B cell (primary cell): ENCODE measurements at regions of chr5 and their contacts with region 1.

Region 1: DNA sequence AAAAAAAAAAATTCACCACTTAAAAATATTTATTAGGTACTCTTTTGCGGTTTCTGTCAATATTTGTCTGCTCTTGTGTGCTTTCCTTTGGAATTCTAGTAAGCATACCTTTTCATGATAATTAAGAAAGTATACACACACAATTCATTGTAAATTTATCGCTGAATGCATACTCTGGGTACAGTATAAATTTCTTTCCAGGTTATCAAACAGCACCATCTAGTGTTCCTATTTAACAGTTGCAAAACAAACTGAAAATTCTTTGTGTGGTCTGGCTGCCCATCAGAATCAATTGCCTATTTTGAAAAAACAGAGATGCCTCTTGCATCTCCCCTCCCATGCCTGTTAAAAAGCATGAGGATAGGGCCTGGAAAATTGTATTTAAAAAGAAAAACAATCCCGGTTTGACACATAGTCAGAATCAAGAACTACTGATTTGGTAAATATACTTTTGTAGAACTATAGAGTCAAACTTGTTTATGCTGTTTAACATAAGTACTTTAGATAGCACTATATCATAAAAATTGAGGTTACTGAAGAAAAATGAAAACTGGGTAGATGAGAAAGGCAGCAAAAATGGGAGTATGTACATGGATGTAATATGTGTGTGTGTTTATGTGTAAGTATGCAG is 16.2 kb downstream of the PGGT1B start:
- DNase-seq: peak; percentile 58
- ATAC-seq: peak; percentile 53
- H3K4me3 ChIP-seq: no peak overlapping the region
- H3K4me3 Mint-ChIP-seq: no peak overlapping the region
- H3K27ac ChIP-seq: no peak overlapping the region
- H3K27ac Mint-ChIP-seq: no peak overlapping the region
- H3K4me1 ChIP-seq: no peaks in the 10 kb centered on the region
- H3K4me1 Mint-ChIP-seq: peaks cover 15% of the 10 kb centered on the region
- H3K27me3 ChIP-seq: no peaks in the 10 kb centered on the region
- H3K27me3 Mint-ChIP-seq: no peaks in the 10 kb centered on the region
- CTCF ChIP-seq: peak; percentile 93

Region 2: DNA sequence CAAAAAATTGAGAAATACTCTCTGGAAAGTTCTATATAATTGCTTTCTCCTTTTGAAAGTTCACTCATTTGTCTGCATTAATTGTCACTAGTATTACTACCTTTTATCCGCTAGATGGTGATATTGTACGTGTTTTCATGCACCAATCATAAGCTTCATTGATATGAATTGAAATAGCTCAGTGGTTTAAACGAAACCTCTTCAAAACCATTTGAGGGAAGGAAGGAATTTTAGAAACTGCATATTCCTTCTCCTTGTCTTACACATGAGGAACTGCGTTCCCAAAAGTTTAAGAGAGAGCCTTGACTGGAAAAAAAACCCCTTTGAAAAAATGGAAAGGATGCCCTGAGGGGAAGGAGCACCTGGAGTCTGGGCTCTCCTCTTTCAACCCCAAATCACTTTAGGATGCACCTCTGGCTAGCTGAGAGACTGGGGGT is 1634.4 kb before region 1 on chr5:
- CTCF ChIA-PET with region 1: interaction called, 11 read pairs
- POLR2A ChIA-PET with region 1: no interaction called
- intact Hi-C with region 1: no loop called
- DNase-seq: peak; percentile 51
- ATAC-seq: peak; percentile 43
- H3K4me3 ChIP-seq: no peak overlapping the region
- H3K4me3 Mint-ChIP-seq: no peak overlapping the region
- H3K27ac ChIP-seq: no peak overlapping the region
- H3K27ac Mint-ChIP-seq: no peak overlapping the region
- H3K4me1 ChIP-seq: peaks cover 0 to 3% of the 10 kb centered on the region in 2 donors
- H3K4me1 Mint-ChIP-seq: peaks cover 1% of the 10 kb centered on the region
- H3K27me3 ChIP-seq: peaks cover 0 to 6% (median 2%) of the 10 kb centered on the region in 4 experiments
- H3K27me3 Mint-ChIP-seq: peaks cover 28% of the 10 kb centered on the region
- CTCF ChIP-seq: peak; percentile 78

Region 3: GRCh38 chr5:113678924-113679575 is 1567.4 kb before region 1 on chr5:
- CTCF ChIA-PET with region 1: no interaction called
- POLR2A ChIA-PET with region 1: no interaction called
- intact Hi-C with region 1: loop called (anchors 5 kb)
- DNase-seq: peak; percentile 10
- ATAC-seq: no peak
- H3K4me3 ChIP-seq: no peak overlapping the region
- H3K4me3 Mint-ChIP-seq: no peak overlapping the region
- H3K27ac ChIP-seq: no peak overlapping the region
- H3K27ac Mint-ChIP-seq: no peak overlapping the region
- H3K4me1 ChIP-seq: no peaks in the 10 kb centered on the region
- H3K4me1 Mint-ChIP-seq: no peaks in the 10 kb centered on the region
- H3K27me3 ChIP-seq: no peaks in the 10 kb centered on the region
- H3K27me3 Mint-ChIP-seq: peaks cover under 1% of the 10 kb centered on the region
- CTCF ChIP-seq: peak; percentile 50

Region 4: GRCh38 chr5:115098041-115098702 is 148.3 kb before region 1 on chr5:
- CTCF ChIA-PET with region 1: interaction called, 194 read pairs
- POLR2A ChIA-PET with region 1: no interaction called
- intact Hi-C with region 1: loop called (anchors 1 kb)
- DNase-seq: peak; percentile 66
- ATAC-seq: peak; percentile 76
- H3K4me3 ChIP-seq: no peak overlapping the region
- H3K4me3 Mint-ChIP-seq: no peak overlapping the region
- H3K27ac ChIP-seq: no peak overlapping the region
- H3K27ac Mint-ChIP-seq: no peak overlapping the region
- H3K4me1 ChIP-seq: no peaks in the 10 kb centered on the region
- H3K4me1 Mint-ChIP-seq: peaks cover 2% of the 10 kb centered on the region
- H3K27me3 ChIP-seq: no peaks in the 10 kb centered on the region
- H3K27me3 Mint-ChIP-seq: peaks cover 3% of the 10 kb centered on the region
- CTCF ChIP-seq: peak; percentile 83